ENCODE measurements at regions of chr4 and their contacts with region 1.

Region 1: GRCh38 chr4:114180481-114180880 is 201.0 kb upstream of the ARSJ start:
- DNase-seq: no peak

Region 2: GRCh38 chr4:113952452-113953029 is 227.9 kb before region 1 on chr4:
- intact Hi-C with region 1: loop called (anchors 10 kb)
- DNase-seq: no peak